PC-9 (cell line): ENCODE measurements at regions of chr4 and their contacts with region 1.

Region 1: GRCh38 chr4:185839194-185839712 is 27.3 kb upstream of the SORBS2 start:
- DNase-seq: peak; percentile 73 to 81
- H3K4me3 ChIP-seq: no peak overlapping the region
- H3K27ac ChIP-seq: peak overlapping the region; percentile 76
- H3K4me1 ChIP-seq: peaks cover 29% of the 10 kb centered on the region
- H3K27me3 ChIP-seq: no peaks in the 10 kb centered on the region
- CTCF ChIP-seq: no peak

Region 2: DNA sequence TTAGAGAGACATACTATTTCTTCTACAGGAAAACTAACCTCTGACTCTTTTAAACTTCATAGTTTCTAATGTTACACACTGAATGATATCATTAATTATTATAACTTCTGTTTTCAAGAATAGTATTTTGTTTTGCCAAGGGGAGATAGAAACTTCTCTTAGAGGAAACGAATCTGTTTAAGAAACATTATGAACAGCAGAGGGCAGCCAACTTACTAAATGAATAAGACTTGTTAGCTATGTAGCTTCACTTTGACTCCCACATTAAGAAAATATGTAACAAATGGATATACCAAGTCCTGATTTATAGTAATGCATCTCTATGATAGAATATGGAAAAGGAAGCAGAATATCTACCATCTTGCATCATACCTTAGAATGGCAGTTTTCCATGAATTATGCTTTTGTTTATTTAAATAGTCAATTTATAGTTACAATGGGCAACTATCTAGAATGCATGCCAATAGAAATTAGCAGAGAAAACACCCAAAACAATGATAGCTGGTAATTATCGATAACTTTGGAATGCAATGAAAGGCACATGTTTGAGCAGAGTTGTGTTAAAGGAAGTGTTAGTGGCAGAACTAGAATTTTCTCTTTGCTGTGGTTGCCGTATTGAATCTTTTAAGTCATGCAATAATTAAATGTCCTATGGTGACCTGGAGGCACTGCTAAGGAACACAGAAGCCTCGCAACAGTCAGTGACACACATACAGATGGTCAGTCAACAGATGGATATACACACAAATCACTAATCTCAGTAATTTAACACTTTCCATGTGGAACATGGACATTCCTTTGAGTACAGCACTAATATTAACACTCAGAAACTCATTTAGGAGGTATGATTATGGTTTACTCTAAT is 198.2 kb before region 1 on chr4:
- CTCF ChIA-PET with region 1: no interaction called
- POLR2A ChIA-PET with region 1: no interaction called
- intact Hi-C with region 1: loop called (anchors 10 kb)
- DNase-seq: peak in 1 of 2 experiments; percentile 38
- H3K4me3 ChIP-seq: no peak overlapping the region
- H3K27ac ChIP-seq: no peak overlapping the region
- H3K4me1 ChIP-seq: no peaks in the 10 kb centered on the region
- H3K27me3 ChIP-seq: no peaks in the 10 kb centered on the region
- CTCF ChIP-seq: peak; percentile 67

Region 3: GRCh38 chr4:185825737-185826136 is 13.5 kb before region 1 on chr4:
- CTCF ChIA-PET with region 1: no interaction called
- POLR2A ChIA-PET with region 1: interaction called, 12 read pairs
- intact Hi-C with region 1: no loop called
- DNase-seq: no peak
- H3K4me3 ChIP-seq: no peak overlapping the region
- H3K27ac ChIP-seq: no peak overlapping the region
- H3K4me1 ChIP-seq: peaks cover 6% of the 10 kb centered on the region; the same call in 1 of the 2 replicates
- H3K27me3 ChIP-seq: no peaks in the 10 kb centered on the region
- CTCF ChIP-seq: no peak

Region 4: GRCh38 chr4:185865901-185866328 is 26.7 kb after region 1 on chr4:
- CTCF ChIA-PET with region 1: no interaction called
- POLR2A ChIA-PET with region 1: no interaction called
- intact Hi-C with region 1: loop called (anchors 1 kb)
- DNase-seq: peak; percentile 67 to 90
- H3K4me3 ChIP-seq: peak overlapping the region; percentile 1; the same call in 1 of the 2 replicates
- H3K27ac ChIP-seq: peak overlapping the region; percentile 96
- H3K4me1 ChIP-seq: peaks cover 34% of the 10 kb centered on the region
- H3K27me3 ChIP-seq: no peaks in the 10 kb centered on the region
- CTCF ChIP-seq: no peak

Region 5: DNA sequence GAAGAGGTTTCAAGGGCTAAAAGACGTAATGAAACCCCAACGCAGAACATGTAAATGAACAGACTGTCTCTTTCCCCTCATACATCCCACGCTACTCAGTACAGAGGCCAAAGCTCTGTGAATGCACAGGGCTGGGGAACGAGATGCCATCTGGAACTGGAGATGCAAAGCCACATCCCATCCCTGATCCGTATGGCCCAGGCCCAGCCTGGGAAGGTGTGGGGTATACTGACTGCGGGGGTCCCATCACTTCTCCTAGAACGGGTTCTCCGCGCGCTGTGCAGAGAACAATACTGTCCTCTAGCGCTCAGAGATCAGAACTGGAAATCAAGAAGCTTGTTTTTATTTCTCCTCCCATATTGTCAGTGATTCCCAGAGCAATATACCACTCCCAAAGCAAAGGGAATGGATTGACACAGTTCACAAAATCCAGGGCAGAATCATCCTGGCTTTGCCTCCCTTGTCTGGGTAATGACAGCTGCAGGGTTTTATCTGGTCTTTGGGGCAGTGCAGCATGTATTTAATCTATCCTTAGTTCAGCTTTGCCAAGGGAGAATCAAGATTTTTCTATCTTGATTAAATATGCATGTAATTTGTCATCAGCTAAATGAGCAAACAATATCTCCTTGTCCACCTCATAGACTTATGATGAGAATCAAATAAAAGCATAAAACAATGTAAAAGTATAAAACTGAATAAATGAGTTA is 182.4 kb after region 1 on chr4:
- CTCF ChIA-PET with region 1: no interaction called
- POLR2A ChIA-PET with region 1: no interaction called
- intact Hi-C with region 1: loop called (anchors 1 kb)
- DNase-seq: peak in 1 of 2 experiments; percentile 25
- H3K4me3 ChIP-seq: no peak overlapping the region
- H3K27ac ChIP-seq: no peak overlapping the region
- H3K4me1 ChIP-seq: no peaks in the 10 kb centered on the region
- H3K27me3 ChIP-seq: no peaks in the 10 kb centered on the region
- CTCF ChIP-seq: peak; percentile 58